ENCODE measurements at regions of chr2 and their contacts with region 1.

Region 1: GRCh38 chr2:163345908-163346573 is 389.8 kb downstream of the FIGN start:
- ATAC-seq: peak in 2 of 8 experiments; percentile 45 to 55
- H3K4me3 ChIP-seq: no peak overlapping the region
- H3K27ac ChIP-seq: no peak overlapping the region
- H3K4me1 ChIP-seq: peaks cover 5 to 27% of the 10 kb centered on the region in 2 donors

Region 2: GRCh38 chr2:163207693-163208370 is 138.2 kb before region 1 on chr2:
- in situ Hi-C with region 1: no loop called
- ATAC-seq: peak in 3 of 8 experiments; percentile 43 to 96 (median 92)
- H3K4me3 ChIP-seq: no peak overlapping the region
- H3K27ac ChIP-seq: no peak overlapping the region
- H3K4me1 ChIP-seq: peaks cover 0 to 6% of the 10 kb centered on the region in 2 donors

Region 3: DNA sequence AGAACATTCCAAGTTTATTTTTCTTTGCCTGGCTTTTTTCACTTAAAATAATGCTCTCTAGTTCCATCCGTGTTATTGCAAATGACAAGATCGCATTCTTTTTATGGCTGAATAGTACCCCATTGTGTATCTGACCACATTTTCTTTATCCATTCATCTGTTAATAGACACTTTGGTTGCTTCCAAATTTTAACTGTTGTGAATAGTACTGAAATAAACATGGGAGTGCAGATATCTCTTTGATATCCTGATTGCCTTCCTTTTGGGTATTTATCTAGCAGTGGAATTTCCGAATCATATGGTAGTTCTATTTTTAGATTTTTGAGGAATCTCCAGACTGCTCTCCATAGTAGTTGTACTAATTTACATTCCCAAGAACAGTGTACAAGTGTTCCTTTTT is 159.2 kb after region 1 on chr2:
- in situ Hi-C with region 1: no loop called
- ATAC-seq: no peak
- H3K4me3 ChIP-seq: no peak overlapping the region
- H3K27ac ChIP-seq: no peak overlapping the region
- H3K4me1 ChIP-seq: no peaks in the 10 kb centered on the region

Region 4: GRCh38 chr2:163878531-163879117 is 532.6 kb after region 1 on chr2:
- in situ Hi-C with region 1: loop called in 1 of 9 experiments (anchors 25 kb)
- ATAC-seq: peak in 2 of 8 experiments; percentile 31 to 61
- H3K4me3 ChIP-seq: no peak overlapping the region
- H3K27ac ChIP-seq: no peak overlapping the region
- H3K4me1 ChIP-seq: no peaks in the 10 kb centered on the region

Region 5: DNA sequence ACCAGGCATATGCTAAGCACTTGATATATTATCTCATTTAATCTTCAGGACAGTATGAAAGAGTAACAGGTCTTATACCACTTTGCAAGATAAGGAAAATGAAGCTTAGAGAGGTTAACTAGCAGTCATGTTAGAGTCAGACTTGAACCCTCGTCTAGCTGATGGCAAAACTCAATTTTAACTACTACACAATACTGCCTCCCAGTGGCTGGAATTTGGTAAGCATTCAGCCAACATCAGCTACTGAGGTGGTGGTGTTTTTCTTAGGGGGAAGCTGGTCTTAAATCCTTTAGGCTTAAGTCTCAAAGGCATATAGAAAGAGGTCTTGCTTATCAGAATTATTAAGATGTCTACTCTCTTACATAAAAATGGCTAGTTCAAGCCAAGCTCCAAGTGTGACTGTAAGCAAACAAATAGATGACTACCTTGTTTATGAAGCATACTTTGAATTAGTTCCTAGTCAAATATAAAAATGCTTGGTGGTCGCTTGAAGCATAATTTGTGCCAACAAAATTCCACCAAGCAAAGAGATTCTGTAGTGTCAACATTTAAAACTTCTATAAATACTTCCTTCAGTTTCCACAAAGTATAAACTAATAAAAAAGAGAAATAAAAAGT is 715.2 kb after region 1 on chr2:
- in situ Hi-C with region 1: loop called in 1 of 9 experiments (anchors 25 kb)
- ATAC-seq: peak in 2 of 8 experiments; percentile 29 to 46
- H3K4me3 ChIP-seq: no peak overlapping the region
- H3K27ac ChIP-seq: no peak overlapping the region
- H3K4me1 ChIP-seq: no peaks in the 10 kb centered on the region

Region 6: GRCh38 chr2:164430166-164430783 is 1084.2 kb after region 1 on chr2:
- in situ Hi-C with region 1: loop called in 2 of 9 experiments (anchors 25 kb)
- ATAC-seq: peak in 6 of 8 experiments; percentile 43 to 63 (median 54)
- H3K4me3 ChIP-seq: no peak overlapping the region
- H3K27ac ChIP-seq: no peak overlapping the region
- H3K4me1 ChIP-seq: peaks cover 0 to 17% of the 10 kb centered on the region in 2 donors